ENCODE measurements at regions of chr3 and their contacts with region 1.

Region 1: GRCh38 chr3:38479431-38480092 is 16.6 kb upstream of the EXOG start:
- DNase-seq: peak; percentile 32
- ATAC-seq: peak; percentile 91
- H3K4me3 ChIP-seq: no peak overlapping the region
- H3K27ac ChIP-seq: no peak overlapping the region
- H3K4me1 ChIP-seq: no peaks in the 10 kb centered on the region
- H3K27me3 ChIP-seq: no peaks in the 10 kb centered on the region
- CTCF ChIP-seq: peak; percentile 86

Region 2: DNA sequence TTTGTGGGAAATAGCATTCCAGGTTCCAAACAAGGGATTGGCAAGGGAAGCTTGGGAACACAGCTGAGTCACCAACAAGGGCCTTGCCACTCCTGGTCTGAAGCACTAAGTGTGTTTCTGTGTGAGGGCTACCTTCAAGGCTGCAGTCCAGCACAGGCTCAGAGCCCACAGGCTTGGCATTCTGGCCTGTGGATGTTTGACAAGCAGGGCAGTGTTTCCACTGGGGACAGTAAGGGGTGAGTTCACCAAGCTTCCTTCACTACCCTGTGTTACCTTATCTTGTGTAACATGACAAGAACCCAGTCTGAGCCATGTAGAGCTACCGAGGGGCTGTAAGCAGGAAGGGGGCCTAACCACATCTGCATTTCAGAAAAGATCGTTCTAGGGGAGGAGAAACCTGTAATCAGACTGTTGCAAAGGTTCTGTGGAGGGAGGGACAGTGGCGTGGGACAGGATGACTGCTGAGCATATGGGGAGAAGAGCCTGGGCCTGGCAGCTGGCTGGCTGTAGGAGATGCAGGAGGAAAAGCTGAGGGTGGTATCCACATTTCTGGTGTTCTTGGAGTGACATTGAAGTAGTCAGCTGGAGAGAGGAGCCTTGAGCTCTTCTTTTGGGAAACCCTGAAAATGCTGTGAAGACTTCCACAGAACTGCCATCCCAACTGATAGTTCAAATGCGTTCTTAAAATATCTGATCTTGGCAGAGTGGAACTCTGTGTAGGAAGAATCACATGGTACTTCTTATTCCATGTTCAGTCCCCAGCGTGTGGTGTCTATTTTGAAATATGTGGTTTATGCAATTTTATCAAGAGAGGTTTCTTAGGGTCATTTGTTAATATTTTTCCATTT is 556.6 kb before region 1 on chr3:
- CTCF ChIA-PET with region 1: no interaction called
- POLR2A ChIA-PET with region 1: no interaction called
- in situ Hi-C with region 1: no loop called
- intact Hi-C with region 1: no loop called
- DNase-seq: no peak
- ATAC-seq: no peak
- H3K4me3 ChIP-seq: no peak overlapping the region
- H3K27ac ChIP-seq: no peak overlapping the region
- H3K4me1 ChIP-seq: no peaks in the 10 kb centered on the region
- H3K27me3 ChIP-seq: no peaks in the 10 kb centered on the region
- CTCF ChIP-seq: no peak

Region 3: GRCh38 chr3:37974121-37975083 is 505.2 kb before region 1 on chr3:
- CTCF ChIA-PET with region 1: no interaction called
- POLR2A ChIA-PET with region 1: no interaction called
- in situ Hi-C with region 1: no loop called
- intact Hi-C with region 1: no loop called
- DNase-seq: peak; percentile 32
- ATAC-seq: peak; percentile 97
- H3K4me3 ChIP-seq: no peak overlapping the region
- H3K27ac ChIP-seq: no peak overlapping the region
- H3K4me1 ChIP-seq: no peaks in the 10 kb centered on the region
- H3K27me3 ChIP-seq: no peaks in the 10 kb centered on the region
- CTCF ChIP-seq: peak; percentile 85

Region 4: GRCh38 chr3:38154033-38154494 is 325.5 kb before region 1 on chr3:
- CTCF ChIA-PET with region 1: no interaction called
- POLR2A ChIA-PET with region 1: no interaction called
- in situ Hi-C with region 1: no loop called
- intact Hi-C with region 1: no loop called
- DNase-seq: no peak
- ATAC-seq: no peak
- H3K4me3 ChIP-seq: no peak overlapping the region
- H3K27ac ChIP-seq: no peak overlapping the region
- H3K4me1 ChIP-seq: no peaks in the 10 kb centered on the region
- H3K27me3 ChIP-seq: no peaks in the 10 kb centered on the region
- CTCF ChIP-seq: no peak

Region 5: DNA sequence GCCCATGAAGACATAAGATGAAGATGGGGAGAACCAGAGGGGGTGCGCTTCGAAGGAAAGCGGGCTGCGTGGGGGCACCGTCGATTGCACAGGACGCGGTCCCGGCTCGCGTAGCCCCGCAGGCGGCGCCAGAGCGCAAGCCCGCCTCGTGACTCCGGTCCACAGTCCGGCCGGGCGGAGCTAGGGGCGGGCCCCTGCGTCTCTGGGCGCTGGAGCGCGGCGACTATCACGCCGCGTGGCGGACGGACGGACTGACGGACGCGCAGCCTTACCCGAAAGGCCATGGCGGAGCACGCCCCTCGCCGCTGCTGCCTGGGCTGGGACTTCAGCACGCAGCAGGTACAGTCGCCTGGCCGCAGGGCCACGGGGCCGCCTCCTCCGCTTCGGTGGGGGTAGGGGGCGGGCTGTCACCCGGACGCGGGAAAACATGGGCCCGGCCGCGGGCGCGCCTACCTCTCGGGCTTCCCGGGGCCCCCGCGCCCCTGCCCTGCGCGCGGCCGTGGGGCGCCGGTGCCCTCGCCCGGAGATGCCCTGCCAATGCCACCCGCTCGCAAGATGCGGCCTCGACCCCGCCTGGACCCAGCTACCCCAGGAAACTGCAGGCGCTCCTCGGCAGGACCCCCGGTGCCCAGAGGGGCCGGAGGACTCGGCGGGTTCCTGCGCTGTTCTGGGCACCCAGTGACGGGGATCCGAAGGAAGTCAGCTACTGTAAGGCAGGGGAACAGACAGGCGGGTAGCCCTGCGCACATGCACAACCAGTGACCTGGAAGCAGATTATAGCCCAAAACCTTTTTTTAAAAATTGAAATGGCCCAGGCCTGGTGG is 132.8 kb before region 1 on chr3 and contains the start of gene XYLB:
- CTCF ChIA-PET with region 1: interaction called, 8 read pairs
- POLR2A ChIA-PET with region 1: no interaction called
- in situ Hi-C with region 1: no loop called
- intact Hi-C with region 1: loop called (anchors 2 kb)
- DNase-seq: peak; percentile 36
- ATAC-seq: peak; percentile 98
- H3K4me3 ChIP-seq: peak within 1 kb of the TSS; percentile 67 to 71
- H3K27ac ChIP-seq: peak within 1 kb of the TSS; percentile 71
- H3K4me1 ChIP-seq: no peaks in the 10 kb centered on the region
- H3K27me3 ChIP-seq: no peaks in the 10 kb centered on the region
- CTCF ChIP-seq: peak; percentile 91
- total RNA-seq, gene XYLB: 6.6 TPM